ENCODE measurements at regions of chr12 and their contacts with region 1.

Region 1: DNA sequence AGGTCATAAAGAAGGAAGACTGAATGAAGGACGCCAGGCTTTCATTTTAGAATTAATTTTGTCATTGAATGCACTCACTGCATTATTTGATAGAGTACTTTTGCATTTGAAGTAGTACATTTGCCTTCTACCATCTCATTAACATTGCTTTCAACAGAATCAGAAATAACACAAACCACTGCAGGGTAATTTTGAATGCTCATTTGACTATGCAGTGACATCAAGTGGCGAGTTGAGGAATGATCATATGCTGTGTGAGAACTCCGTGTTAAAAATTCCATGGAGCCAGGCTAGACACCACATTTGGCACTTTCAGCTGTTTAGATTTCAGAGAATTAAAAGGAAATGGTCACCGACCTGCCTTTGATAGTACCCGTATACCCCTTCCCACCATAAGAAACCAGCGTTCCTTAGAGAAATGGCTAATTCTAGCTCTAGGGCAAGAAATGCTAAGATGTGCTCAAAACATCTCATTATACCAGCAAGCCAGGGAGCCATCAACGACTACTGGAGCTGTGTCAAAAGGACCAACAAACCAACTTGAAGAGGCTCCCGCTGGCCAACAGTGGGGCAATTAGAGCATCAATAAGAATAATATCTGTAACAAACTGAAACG is 16.5 kb downstream of the HEBP1 start:
- DNase-seq: peak in 27 of 42 donors; percentile 27 to 84 (median 64)

Region 2: GRCh38 chr12:12813120-12814101 is 170.1 kb before region 1 on chr12 and contains the start of gene DDX47:
- intact Hi-C with region 1: loop called (anchors 10 kb)
- DNase-seq: peak; percentile 88 to 99 (median 96)